ENCODE measurements at regions of chr10 and their contacts with region 1.

Region 1: GRCh38 chr10:24451325-24451820 is 242.4 kb downstream of the KIAA1217 start:
- DNase-seq: no peak
- ATAC-seq: peak; percentile 53 to 77 (median 69)
- H3K4me3 ChIP-seq: peak overlapping the region; percentile 67
- H3K27ac ChIP-seq: peak overlapping the region; percentile 91
- H3K4me1 ChIP-seq: peaks cover 70% of the 10 kb centered on the region
- H3K27me3 ChIP-seq: no peaks in the 10 kb centered on the region
- CTCF ChIP-seq: no peak

Region 2: GRCh38 chr10:24383681-24384106 is 67.7 kb before region 1 on chr10:
- intact Hi-C with region 1: loop called in 1 of 2 experiments (anchors 5 kb)
- DNase-seq: peak; percentile 93 to 97
- ATAC-seq: peak; percentile 89 to 93 (median 91)
- H3K4me3 ChIP-seq: peak overlapping the region; percentile 21
- H3K27ac ChIP-seq: peak overlapping the region; percentile 89
- H3K4me1 ChIP-seq: peaks cover 45% of the 10 kb centered on the region
- H3K27me3 ChIP-seq: no peaks in the 10 kb centered on the region
- CTCF ChIP-seq: peak; percentile 54

Region 3: DNA sequence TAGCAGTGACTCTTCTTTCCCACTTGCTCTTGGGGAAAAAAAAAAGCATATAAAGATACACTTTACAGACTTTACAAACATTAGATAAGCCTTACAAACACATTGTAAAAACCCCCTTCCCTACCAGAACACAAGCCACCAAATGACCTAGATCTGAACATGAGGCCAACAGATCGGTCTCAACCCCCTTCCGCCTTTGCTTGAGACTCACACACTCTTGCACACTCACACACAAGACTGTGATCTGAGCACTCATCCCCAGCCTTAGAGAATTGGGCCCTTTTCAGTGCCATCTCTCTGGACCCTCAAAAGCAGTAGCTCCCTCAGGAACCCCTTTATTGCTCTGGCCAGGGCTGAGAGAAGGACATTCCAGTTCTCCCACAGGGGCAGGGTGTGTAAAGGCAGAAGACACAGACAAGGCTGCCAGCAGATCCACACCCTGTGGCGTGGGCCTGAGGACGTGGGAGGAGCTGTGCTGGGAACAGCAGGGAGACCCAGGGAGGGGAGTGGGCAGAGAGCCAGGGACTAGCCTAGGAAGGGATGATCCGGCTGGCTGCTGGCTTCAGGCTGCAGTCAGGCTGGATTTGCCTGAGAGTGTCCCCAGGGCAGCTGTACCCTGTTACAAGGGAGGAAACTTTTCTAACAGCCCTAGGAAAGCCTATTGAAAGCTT is 35.8 kb before region 1 on chr10:
- intact Hi-C with region 1: loop called in 1 of 2 experiments (anchors 5 kb)
- DNase-seq: peak; percentile 87 to 96
- ATAC-seq: peak; percentile 61 to 91 (median 86)
- H3K4me3 ChIP-seq: peak overlapping the region; percentile 26
- H3K27ac ChIP-seq: peak overlapping the region; percentile 82
- H3K4me1 ChIP-seq: peaks cover 38% of the 10 kb centered on the region
- H3K27me3 ChIP-seq: no peaks in the 10 kb centered on the region
- CTCF ChIP-seq: no peak

Region 4: DNA sequence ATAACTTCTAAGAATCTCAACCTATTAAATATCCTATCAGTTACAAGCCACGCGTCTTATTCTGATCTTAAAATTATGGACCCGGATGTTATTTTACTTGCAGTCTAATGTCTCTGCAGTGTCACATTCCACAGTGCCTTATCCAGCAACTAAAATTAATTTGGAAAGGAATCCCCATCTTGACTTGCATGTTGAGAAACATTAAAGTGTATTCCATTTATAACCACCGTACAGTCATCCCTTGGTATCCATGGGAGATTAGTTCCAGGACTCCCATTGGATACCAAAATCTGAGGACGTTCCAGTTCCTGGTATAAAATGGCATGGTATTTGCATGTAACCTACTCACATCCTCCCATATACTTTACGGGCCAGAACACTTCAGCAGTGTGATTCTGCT is 77.6 kb after region 1 on chr10:
- intact Hi-C with region 1: no loop called
- DNase-seq: no peak
- ATAC-seq: peak; percentile 86 to 89 (median 88)
- H3K4me3 ChIP-seq: no peak overlapping the region
- H3K27ac ChIP-seq: peak overlapping the region; percentile 82
- H3K4me1 ChIP-seq: no peaks in the 10 kb centered on the region
- H3K27me3 ChIP-seq: no peaks in the 10 kb centered on the region
- CTCF ChIP-seq: no peak

Measured in psoas muscle (tissue), 8 donors.